ENCODE measurements at regions of chr11 and their contacts with region 1.

Region 1: GRCh38 chr11:3220521-3221407 is 2.2 kb upstream of the MRGPRG start:
- DNase-seq: peak; percentile 7
- H3K4me3 ChIP-seq: no peak overlapping the region
- H3K27ac ChIP-seq: no peak overlapping the region
- H3K4me1 ChIP-seq: peaks cover 0 to 7% (median 0%) of the 10 kb centered on the region in 4 donors
- H3K27me3 ChIP-seq: peaks cover 80% of the 10 kb centered on the region
- CTCF ChIP-seq: no peak
- EP300 ChIP-seq: no peak
- POLR2A ChIP-seq: no peak

Region 2: DNA sequence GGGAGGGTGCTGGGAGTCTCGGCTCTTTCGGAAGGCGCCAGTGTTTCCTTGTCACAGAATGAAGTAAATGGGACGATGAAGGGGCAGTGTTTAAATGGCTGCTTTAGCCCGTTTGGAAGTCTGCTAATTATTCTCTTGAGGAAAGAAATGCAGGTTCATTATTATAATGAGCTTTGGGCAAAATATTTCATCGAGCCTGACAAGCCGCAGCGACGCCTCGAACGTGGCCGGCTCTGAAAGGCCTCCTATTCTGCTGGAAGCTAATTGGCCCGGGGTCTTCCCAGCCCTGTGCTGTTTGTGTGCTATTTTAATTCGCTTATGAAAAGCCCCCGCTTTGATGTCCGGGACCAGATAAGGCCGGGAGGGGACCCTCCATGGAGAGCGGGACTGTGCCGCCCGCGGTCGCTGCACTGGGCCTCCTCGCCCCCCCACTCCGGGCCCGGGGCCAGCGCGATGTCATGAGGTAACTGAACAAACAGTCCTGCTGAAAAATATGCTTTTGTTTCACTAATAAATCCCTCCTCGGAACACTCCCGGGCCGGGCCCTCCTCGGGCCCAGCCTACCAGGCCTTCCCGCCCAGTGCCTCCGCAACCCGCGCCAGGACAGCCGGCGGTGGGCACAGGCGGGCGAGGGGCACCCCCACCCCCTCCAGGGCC is 413.6 kb before region 1 on chr11:
- in situ Hi-C with region 1: no loop called
- intact Hi-C with region 1: no loop called
- DNase-seq: peak; percentile 79
- H3K4me3 ChIP-seq: no peak overlapping the region
- H3K27ac ChIP-seq: peak overlapping the region; percentile 24 to 76 (median 56)
- H3K4me1 ChIP-seq: peaks cover 18 to 31% (median 18%) of the 10 kb centered on the region in 4 donors
- H3K27me3 ChIP-seq: no peaks in the 10 kb centered on the region
- CTCF ChIP-seq: no peak
- EP300 ChIP-seq: no peak
- POLR2A ChIP-seq: no peak

Region 3: DNA sequence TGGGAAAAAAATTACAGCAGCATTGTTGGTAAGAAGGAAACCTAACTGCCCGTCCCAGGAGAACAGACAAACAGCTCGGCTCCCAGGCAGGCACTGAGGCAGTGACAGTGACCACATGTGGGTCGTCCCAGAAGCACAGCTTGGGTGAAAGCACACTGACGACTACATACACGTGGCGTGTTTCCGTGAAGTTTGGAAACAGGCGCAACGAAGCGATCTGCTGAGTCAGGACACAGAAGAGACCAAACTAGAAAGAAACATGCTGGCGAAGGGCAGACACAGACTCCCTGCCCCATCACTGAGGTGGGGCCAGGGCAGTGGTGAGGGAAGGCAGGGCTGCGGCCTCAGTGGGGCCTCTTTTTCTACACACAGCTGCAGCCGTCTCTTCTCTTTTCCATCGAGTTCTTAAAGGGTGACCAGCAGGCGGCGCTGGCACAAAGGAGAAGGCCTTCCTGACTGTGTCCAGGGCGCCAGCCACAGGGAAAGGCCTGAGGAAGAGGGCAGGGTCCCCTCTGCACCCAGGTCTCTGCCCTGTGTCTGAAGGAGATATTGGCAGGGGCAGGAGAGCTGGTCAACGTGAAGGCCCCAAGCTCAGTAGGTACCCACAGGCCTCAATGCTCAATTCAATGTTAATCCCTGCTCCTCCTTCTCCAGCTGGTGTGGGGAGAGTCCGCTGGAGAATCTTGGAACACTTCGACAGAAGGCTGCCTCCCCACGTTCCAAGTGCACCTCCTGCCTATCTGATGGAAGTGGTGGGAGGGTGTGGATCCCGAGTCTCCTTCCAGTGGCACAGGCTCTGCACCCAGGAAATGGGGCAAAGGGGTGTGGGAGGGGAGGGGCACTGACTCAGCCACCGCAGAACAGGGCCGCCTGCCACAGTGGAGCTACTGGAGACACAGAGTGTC is 183.5 kb before region 1 on chr11:
- in situ Hi-C with region 1: loop called (anchors 10 to 25 kb)
- intact Hi-C with region 1: loop called (anchors 10 kb)
- DNase-seq: peak; percentile 82
- H3K4me3 ChIP-seq: no peak overlapping the region
- H3K27ac ChIP-seq: peak overlapping the region in 1 of 4 donors; percentile 8
- H3K4me1 ChIP-seq: peaks cover 0 to 14% (median 3%) of the 10 kb centered on the region in 4 donors
- H3K27me3 ChIP-seq: no peaks in the 10 kb centered on the region
- CTCF ChIP-seq: peak; percentile 77 to 86 (median 78)
- EP300 ChIP-seq: no peak
- POLR2A ChIP-seq: no peak

Region 4: DNA sequence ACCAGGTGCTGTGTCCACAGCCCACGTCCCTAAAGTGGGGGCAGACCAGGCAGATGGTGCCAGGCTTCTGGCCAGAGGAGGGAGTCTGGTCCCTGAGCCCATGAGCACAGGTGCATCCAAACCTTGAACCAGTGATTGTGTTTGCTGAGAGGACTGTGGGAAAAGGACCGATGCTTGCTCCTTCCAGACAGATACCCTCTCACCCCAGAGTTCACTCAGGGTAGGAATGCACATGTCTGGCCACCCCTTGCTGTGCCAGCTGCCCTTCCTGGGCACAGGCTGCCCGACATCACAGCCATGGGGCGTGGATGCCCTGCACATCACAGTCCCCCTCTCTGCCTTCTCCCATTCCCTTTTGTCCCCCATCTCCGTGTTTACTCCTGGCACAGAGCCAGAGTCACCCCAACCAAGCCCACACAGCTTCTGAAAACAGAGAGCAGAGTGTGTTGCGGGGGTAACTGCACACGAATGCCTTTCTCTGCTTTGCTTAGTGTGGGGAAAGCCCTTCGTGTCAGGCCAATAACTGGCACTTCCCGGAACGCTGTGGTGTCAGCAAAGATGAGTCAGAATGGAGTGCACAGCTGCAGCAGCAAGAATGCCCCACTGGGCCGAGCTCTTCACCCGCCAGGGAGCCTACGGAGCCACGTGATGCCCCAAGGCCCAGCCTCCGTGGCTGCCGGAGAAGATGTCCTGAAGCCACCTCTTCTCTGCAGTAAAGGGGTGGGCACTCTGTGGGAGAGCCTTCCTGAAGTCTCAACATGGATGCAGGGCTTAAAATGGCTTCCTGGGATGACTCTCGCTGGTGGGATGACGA is 171.1 kb before region 1 on chr11:
- in situ Hi-C with region 1: loop called in 2 of 4 experiments (anchors 10 to 25 kb)
- intact Hi-C with region 1: no loop called
- DNase-seq: peak; percentile 80
- H3K4me3 ChIP-seq: no peak overlapping the region
- H3K27ac ChIP-seq: peak overlapping the region; percentile 64 to 83 (median 71)
- H3K4me1 ChIP-seq: peaks cover 13 to 28% (median 20%) of the 10 kb centered on the region in 4 donors
- H3K27me3 ChIP-seq: no peaks in the 10 kb centered on the region
- CTCF ChIP-seq: no peak
- EP300 ChIP-seq: peak; percentile 6
- POLR2A ChIP-seq: no peak

Region 5: DNA sequence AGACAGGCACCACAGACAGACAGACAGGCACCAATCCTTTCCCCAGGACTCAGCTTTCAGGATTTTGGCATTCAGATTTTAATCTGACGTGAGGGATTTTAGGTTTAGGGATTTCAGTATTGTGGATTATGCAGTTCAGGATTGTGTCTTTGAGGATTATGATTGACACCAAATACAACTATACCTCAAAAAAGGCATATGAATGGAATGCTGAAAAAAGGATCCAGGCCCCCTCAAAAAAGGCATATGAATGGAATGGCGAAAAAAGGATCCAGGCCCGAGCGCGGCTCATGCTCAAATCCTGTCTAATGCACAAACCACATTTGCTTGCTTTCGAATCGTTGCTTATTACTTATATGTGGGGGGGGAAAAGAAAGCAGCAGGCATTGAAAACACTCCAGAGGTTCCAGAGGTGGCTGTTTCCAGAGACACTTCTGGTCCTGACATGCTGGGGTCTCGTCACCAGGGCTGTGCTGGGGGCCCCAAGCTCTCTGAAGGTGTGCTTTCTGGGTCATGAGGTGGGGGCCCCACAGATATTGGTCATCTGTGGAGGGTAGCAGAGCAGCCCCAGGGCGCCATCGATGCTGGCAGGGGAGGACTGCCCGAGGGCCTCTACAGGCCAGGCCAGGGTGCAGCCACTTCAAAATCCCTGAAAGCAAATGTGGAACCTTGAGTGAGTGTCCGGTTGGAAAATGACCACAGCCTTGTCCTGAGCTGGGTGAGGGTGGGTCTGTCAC is 38.9 kb before region 1 on chr11:
- in situ Hi-C with region 1: no loop called
- intact Hi-C with region 1: loop called (anchors 1 kb)
- DNase-seq: no peak
- H3K4me3 ChIP-seq: no peak overlapping the region
- H3K27ac ChIP-seq: no peak overlapping the region
- H3K4me1 ChIP-seq: no peaks in the 10 kb centered on the region
- H3K27me3 ChIP-seq: no peaks in the 10 kb centered on the region
- CTCF ChIP-seq: no peak
- EP300 ChIP-seq: no peak
- POLR2A ChIP-seq: no peak

Measured in transverse colon (tissue), 4 donors.